Tibial artery (tissue), 4 donors: ENCODE measurements at regions of chr20 and their contacts with region 1.

Region 1: DNA sequence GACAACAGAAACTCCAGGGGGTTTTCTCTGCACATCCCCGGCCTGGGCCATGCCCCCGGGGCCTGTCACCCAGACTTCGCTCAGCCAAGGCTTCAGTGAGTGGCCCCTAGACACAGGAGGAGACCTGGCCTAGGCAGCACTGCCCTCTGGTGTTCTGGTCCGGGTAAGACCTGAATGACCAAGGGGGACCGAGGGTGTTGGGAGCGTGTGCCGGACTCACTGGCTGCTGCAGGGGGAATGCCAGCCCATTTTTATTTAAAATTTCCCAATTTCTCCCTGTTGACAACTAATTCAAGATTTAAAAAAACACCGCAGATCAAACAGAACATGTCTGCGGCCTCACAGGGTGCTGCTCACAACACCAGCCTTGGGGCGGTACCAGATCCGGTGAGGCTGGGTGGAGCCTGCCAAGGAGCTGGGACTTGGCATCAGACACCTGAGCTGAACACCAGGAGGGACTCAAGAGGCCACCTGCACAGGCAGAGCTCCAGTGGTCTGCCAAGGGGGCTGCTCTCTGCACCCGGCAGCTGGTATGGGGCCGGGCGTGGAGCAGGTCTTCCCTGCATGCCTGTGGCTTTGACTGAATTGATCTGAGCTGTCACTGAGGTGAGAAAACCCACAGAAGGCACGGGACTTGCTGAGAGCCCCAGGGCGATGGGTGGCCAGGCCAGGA is 47.8 kb downstream of the DSTN start:
- DNase-seq: peak; percentile 64 to 89
- H3K4me3 ChIP-seq: no peak overlapping the region
- H3K27ac ChIP-seq: peak overlapping the region in 1 of 2 donors; percentile 95
- H3K4me1 ChIP-seq: peaks cover 13 to 52% (median 43%) of the 10 kb centered on the region in 4 donors
- H3K27me3 ChIP-seq: no peaks in the 10 kb centered on the region
- CTCF ChIP-seq: peak; percentile 85 to 95

Region 2: DNA sequence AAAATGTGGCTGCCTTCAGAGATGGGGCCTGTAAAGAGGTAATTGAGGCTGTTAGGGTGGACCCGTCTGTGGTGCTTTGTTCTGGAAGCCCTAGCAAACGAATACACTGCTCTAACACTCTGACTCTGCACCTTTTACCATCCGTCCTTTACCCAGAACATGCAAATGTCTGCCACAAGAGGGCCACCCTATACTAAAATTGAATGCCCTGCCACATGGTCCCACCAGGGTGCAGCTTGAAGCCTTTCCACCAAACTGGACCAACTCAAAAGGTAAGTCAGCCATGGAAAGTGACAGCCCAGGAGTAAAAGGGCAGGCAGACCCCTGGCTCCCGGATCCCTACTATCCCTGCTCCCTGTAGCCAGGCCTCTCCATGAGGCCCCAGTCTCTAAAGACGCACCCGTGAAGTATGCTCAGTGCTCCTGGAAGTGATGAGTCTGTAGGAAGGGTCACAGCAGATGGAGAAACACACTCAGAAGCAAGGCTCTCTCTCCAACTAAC is 80.7 kb before region 1 on chr20:
- intact Hi-C with region 1: loop called (anchors 1 kb)
- DNase-seq: peak; percentile 77 to 87
- H3K4me3 ChIP-seq: no peak overlapping the region
- H3K27ac ChIP-seq: peak overlapping the region; percentile 45 to 58
- H3K4me1 ChIP-seq: peaks cover 0 to 53% (median 27%) of the 10 kb centered on the region in 4 donors
- H3K27me3 ChIP-seq: no peaks in the 10 kb centered on the region
- CTCF ChIP-seq: peak; percentile 94 to 99